ENCODE measurements at regions of chr6 and their contacts with region 1.

Region 1: DNA sequence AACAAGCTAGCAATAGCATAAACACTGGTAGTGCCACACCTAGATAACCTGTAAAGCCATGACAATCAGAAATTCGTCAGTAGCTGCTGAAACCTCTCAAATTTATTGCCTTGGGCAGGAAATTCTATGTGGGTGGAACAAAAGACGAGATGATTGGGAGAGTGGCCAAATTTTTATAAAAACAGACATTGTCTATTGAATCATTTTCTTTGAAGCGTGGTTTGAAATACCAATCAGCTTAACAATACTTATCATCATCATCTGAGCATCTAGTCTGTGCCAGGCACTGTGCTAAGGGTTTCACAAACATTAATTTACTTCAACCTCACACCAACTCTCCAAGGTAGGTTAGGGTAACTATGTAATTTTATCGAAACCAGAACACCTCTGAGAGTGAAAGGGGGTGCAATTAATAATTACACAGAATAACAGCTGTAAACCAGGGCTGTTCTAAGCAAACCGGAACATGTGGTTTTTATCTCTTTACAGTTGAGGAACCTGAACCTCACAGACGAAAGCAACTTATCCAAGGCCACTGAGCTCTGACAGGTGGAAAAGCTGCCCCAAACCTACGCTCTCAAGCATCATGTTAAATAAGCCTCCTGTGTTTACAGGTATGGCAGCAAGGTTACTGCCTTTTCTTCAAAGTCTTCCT is 43.4 kb downstream of the NHSL1 start:
- DNase-seq: peak; percentile 14
- H3K4me3 Mint-ChIP-seq: peak overlapping the region; percentile 5
- H3K27ac Mint-ChIP-seq: peak overlapping the region; percentile 55
- H3K4me1 Mint-ChIP-seq: peaks cover 25% of the 10 kb centered on the region
- H3K27me3 Mint-ChIP-seq: no peaks in the 10 kb centered on the region

Region 2: GRCh38 chr6:138410972-138411667 is 44.8 kb before region 1 on chr6:
- intact Hi-C with region 1: loop called (anchors 1 kb)
- DNase-seq: no peak
- H3K4me3 Mint-ChIP-seq: no peak overlapping the region
- H3K27ac Mint-ChIP-seq: peak overlapping the region; percentile 74
- H3K4me1 Mint-ChIP-seq: peaks cover 18% of the 10 kb centered on the region
- H3K27me3 Mint-ChIP-seq: no peaks in the 10 kb centered on the region